ENCODE measurements at regions of chr13 and their contacts with region 1.

Region 1: DNA sequence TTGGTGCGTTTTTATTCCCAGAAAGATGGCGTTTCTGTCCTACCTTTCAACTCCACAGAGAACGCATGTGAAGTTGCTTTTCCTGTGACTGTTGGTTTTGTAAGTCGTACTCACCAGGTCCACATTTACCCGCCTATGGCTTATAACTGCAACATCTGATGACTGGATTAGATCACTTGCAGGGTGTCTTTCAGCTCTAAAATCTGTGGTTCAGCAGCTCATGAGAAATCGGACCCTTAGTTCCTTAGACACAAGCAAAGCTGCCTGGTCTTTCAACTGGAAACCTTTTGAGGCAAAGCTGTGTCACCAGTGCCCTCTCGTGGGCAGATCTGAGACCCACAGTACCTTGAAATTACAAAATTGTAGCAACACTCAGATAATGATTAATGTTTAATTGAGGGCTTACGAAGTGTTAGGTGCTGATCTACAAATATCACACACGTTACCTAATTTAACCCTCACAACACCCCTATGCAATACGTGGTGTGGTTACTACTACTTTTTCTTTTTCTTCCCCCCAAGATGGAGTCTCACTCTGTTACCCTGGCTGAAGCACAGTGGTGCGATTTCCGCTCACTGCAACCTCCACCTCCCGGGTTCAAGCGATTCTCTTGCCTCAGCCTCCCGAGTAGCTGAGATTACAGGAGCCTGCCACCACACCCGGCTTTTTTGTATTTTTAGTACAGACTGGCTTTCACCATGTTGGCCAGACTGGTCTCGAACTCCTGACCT is 65.4 kb downstream of the RUBCNL start:
- DNase-seq: peak; percentile 52
- H3K4me3 Mint-ChIP-seq: peak overlapping the region; percentile 84
- H3K27ac Mint-ChIP-seq: peak overlapping the region; percentile 93
- H3K4me1 Mint-ChIP-seq: peaks cover 38% of the 10 kb centered on the region
- H3K27me3 Mint-ChIP-seq: peaks cover 2% of the 10 kb centered on the region

Region 2: GRCh38 chr13:45434556-45435371 is 886.9 kb before region 1 on chr13:
- intact Hi-C with region 1: no loop called
- DNase-seq: no peak
- H3K4me3 Mint-ChIP-seq: no peak overlapping the region
- H3K27ac Mint-ChIP-seq: no peak overlapping the region
- H3K4me1 Mint-ChIP-seq: no peaks in the 10 kb centered on the region
- H3K27me3 Mint-ChIP-seq: peaks cover 2% of the 10 kb centered on the region

Region 3: GRCh38 chr13:45623515-45624090 is 698.1 kb before region 1 on chr13:
- intact Hi-C with region 1: loop called (anchors 1 kb)
- DNase-seq: no peak
- H3K4me3 Mint-ChIP-seq: no peak overlapping the region
- H3K27ac Mint-ChIP-seq: no peak overlapping the region
- H3K4me1 Mint-ChIP-seq: no peaks in the 10 kb centered on the region
- H3K27me3 Mint-ChIP-seq: peaks cover 14% of the 10 kb centered on the region

Region 4: DNA sequence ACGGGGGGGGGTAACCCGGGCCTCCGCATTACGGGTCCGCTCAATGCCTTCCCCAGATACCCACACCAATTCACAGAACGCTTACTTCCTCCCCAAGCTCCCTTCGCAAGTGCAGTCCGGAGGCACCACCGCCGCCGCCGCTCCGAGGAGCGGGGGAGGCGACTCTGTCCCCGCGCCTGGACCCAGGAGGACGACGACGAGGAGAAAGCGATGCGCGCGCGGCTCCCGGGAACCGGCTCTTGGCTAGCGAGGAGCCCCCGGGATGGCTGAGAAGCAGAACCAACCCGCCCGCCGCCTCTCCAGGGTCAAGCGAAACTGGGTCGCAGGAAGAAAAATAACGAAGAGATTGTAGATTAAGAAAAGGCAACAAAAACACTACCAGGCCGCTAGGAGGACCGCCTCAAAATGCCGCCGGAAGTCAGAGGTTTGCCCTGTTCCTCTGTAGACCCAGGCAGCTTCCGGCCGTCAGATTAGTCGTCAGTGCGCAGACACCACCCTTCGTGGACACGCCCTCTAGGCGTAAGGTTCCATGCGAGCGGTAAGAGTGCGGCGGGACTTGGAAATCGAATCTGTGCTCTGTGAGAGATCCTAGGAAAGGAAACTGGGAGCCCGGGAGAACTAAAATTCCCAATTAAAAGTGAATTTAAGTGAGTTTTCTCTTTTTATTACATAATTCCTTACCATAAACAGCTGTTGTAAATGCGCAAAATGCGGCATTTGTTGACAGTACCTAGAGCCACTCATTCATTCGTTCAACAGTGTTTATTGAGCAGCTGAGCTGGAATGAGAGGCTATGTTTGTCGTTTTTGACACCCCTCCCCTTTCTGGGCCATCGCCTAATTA is 269.1 kb before region 1 on chr13 and contains the start of gene ZC3H13:
- intact Hi-C with region 1: loop called (anchors 2 kb)
- DNase-seq: peak; percentile 89
- H3K4me3 Mint-ChIP-seq: peak within 1 kb of the TSS; percentile 93
- H3K27ac Mint-ChIP-seq: peak within 1 kb of the TSS; percentile 94
- H3K4me1 Mint-ChIP-seq: peaks cover 40% of the 10 kb centered on the region
- H3K27me3 Mint-ChIP-seq: peaks cover 15% of the 10 kb centered on the region
- total RNA-seq, gene ZC3H13: 52.0 and 59.4 TPM in 2 replicates

Region 5: GRCh38 chr13:46160471-46161066 is 161.1 kb before region 1 on chr13:
- intact Hi-C with region 1: loop called (anchors 1 kb)
- DNase-seq: peak; percentile 45
- H3K4me3 Mint-ChIP-seq: peak overlapping the region; percentile 79
- H3K27ac Mint-ChIP-seq: peak overlapping the region; percentile 89
- H3K4me1 Mint-ChIP-seq: peaks cover 59% of the 10 kb centered on the region
- H3K27me3 Mint-ChIP-seq: no peaks in the 10 kb centered on the region

Region 6: DNA sequence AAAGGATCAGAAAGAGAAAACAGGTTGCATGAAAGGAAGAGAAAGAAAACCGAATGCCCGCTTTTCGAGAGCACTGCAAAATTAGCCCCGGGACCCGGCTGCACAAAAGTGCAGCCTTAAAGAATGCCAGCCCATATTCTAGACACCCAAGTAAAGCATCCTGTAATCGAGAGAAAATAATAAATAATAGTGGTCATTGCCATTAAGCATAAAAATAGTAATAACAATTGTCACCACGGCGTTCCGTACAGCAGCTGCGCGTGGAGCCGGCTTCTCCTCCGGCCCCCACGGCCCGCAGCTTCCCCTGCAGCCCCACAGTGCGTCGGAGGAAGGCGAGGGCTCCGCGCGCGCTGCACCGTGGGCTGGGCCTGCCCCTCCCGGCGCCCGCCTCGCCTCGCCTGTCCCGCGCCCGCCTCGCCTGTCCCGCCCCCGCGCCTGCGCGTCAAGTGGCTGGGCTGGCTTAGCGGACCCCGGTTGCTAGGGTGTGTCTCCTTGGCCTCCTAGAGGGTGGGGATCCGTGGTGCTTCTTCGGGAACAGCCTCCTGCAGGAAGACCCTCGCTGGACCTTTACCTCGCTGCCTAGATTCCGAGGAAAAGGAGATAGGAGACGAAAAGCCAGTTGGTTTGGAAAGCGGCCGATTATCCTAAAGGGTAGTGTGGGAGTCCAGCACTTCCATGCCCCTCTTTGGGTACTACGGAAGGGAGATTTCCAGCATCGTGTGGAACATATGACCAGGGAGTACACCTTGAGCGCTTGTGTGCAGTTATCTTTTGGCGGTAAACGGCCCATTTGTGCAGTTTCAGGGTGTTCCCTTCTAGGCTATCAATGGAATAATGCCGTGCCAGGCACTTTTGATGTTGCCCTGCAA is 109.9 kb before region 1 on chr13 and contains the start of gene LRRC63:
- intact Hi-C with region 1: loop called (anchors 2 kb)
- DNase-seq: peak; percentile 85
- H3K4me3 Mint-ChIP-seq: peak within 1 kb of the TSS; percentile 84
- H3K27ac Mint-ChIP-seq: peak within 1 kb of the TSS; percentile 87
- H3K4me1 Mint-ChIP-seq: peaks cover 26% of the 10 kb centered on the region
- H3K27me3 Mint-ChIP-seq: peaks cover 1% of the 10 kb centered on the region
- total RNA-seq, gene LRRC63: 0.13 and 0.17 TPM in 2 replicates

Region 7: DNA sequence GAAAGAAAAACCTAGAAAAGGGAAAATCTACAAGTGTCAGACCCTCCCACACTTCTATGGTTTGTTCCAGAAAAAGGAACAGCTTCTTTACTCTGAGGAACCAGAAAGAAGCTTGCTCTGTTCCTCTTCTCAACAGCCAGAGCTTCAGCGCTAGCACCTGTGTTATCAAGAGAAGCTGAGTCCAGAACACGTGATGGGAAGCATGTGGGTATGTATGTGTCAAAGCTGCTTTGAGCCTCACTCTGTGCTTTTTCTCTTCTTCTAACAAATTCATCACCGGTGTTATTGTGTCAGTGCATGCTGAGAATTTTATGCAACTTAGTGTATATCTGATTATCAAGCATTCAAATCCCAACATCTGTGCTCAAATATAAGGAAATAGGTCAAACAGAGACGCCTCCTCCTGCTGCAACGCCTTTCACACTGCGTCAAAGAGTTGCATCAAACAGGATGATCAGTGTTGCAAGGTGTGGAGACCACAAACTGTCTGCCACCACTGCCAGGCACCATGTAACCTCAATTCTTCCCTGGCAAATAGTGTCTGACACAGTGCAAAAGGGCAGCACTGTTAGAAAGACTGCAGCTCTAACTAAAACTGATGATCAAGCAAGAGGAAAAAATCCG is 26.1 kb before region 1 on chr13:
- intact Hi-C with region 1: loop called (anchors 1 kb)
- DNase-seq: peak; percentile 48
- H3K4me3 Mint-ChIP-seq: peak overlapping the region; percentile 66
- H3K27ac Mint-ChIP-seq: peak overlapping the region; percentile 95
- H3K4me1 Mint-ChIP-seq: peaks cover 46% of the 10 kb centered on the region
- H3K27me3 Mint-ChIP-seq: no peaks in the 10 kb centered on the region

Region 8: DNA sequence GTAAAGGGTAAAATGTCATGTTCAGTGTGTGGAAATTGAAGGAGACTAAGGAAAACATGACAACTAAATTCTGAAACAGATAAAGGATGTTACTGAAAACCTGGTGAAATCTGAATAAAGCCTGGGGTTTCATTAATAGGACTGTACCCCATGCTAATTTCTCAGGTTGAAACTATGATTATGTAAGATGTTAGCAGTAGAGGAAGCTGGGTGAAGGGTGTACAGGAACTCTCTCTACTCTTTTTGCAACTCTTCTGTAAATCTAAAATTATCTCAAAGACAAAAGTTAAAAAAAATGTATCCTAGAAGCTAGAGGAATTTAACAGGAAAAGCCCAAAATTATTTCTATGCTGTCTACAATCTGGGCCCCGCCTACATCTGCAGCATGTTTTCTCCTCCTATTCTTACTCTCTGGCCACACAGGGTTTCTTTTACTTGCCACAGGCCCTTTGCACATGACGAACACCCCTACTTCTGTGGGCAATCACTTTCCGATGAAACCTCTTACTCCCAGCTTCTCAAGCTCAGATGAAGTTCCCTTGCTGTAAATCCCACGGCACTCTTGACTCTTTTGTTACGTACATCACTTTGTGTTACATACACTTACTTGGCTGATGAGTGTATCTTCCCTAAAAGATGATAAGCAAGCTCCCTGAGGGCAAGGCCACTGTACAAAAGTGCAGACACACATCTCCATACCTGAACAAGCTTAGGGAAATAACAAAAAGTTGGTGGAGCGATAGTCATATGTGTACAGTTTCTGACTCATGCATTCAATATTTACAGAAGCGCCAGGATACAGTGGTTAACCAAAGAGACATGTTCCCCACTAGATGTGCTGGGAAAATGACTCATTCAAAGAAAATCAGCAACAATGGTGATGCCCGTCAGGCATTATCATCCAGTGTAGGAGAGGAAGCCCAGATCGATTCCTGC is 32.8 kb after region 1 on chr13:
- intact Hi-C with region 1: loop called (anchors 5 kb)
- DNase-seq: peak; percentile 53
- H3K4me3 Mint-ChIP-seq: peak overlapping the region; percentile 3
- H3K27ac Mint-ChIP-seq: peak overlapping the region; percentile 93
- H3K4me1 Mint-ChIP-seq: peaks cover 22% of the 10 kb centered on the region
- H3K27me3 Mint-ChIP-seq: no peaks in the 10 kb centered on the region

Region 9: GRCh38 chr13:46387064-46387851 is 65.6 kb after region 1 on chr13 and contains the start of gene RUBCNL:
- intact Hi-C with region 1: no loop called
- DNase-seq: peak; percentile 13
- H3K4me3 Mint-ChIP-seq: peak within 1 kb of the TSS; percentile 87
- H3K27ac Mint-ChIP-seq: peak within 1 kb of the TSS; percentile 15
- H3K4me1 Mint-ChIP-seq: peaks cover 40% of the 10 kb centered on the region
- H3K27me3 Mint-ChIP-seq: peaks cover 23% of the 10 kb centered on the region
- total RNA-seq, gene RUBCNL: 1.2 and 2.8 TPM in 2 replicates

Measured in activated T-helper 1 cell treated with anti-CD3 and anti-CD28 coated beads, Interleukin-12 subunit alpha, Interleukin-12 subunit beta, Interleukin-2, Interleukin-4 antibody, amounts not matched to agents 30 ng/mL and 10 ng/mL and 1 ng/mL, durations not matched to agents 14 hours and 24 hours and 36 hours (primary cell).